Mammary epithelial cell (primary cell): ENCODE measurements at regions of chr5 and their contacts with region 1.

Region 1: DNA sequence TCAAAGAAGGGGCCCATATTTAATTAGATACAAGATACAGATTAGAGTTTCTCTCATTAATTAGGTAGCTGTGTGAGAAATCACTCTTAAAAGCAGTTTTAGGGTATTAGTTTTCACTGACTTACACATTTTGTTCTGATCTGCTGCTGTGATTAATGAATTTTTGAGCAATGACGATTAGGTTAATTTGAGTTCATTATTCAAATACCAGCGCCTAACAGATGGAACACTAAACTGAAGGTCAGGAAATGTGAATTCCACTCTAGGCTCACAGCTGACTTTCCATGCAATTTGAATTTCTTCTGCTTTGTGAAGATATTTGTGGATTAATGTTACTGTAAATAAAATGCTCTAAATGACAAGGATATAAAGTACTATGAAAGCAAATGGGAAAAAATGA is 380.6 kb downstream of the ADGRV1 start:
- DNase-seq: no peak
- H3K4me3 ChIP-seq: no peak overlapping the region
- H3K27ac ChIP-seq: no peak overlapping the region
- H3K4me1 ChIP-seq: peaks cover 12% of the 10 kb centered on the region
- H3K27me3 ChIP-seq: no peaks in the 10 kb centered on the region
- CTCF ChIP-seq: no peak

Region 2: GRCh38 chr5:90878549-90879196 is 60.5 kb before region 1 on chr5:
- CTCF ChIA-PET with region 1: no interaction called
- dilution Hi-C with region 1: no loop called
- in situ Hi-C with region 1: no loop called
- intact Hi-C with region 1: no loop called
- DNase-seq: peak; percentile 16
- H3K4me3 ChIP-seq: no peak overlapping the region
- H3K27ac ChIP-seq: no peak overlapping the region
- H3K4me1 ChIP-seq: no peaks in the 10 kb centered on the region
- H3K27me3 ChIP-seq: no peaks in the 10 kb centered on the region
- CTCF ChIP-seq: no peak

Region 3: GRCh38 chr5:91089758-91090157 is 150.5 kb after region 1 on chr5:
- CTCF ChIA-PET with region 1: no interaction called
- dilution Hi-C with region 1: no loop called
- in situ Hi-C with region 1: loop called in 1 of 2 experiments (anchors 25 kb)
- intact Hi-C with region 1: loop called (anchors 5 kb)
- DNase-seq: no peak
- H3K4me3 ChIP-seq: no peak overlapping the region
- H3K27ac ChIP-seq: no peak overlapping the region
- H3K4me1 ChIP-seq: no peaks in the 10 kb centered on the region
- H3K27me3 ChIP-seq: peaks cover 3% of the 10 kb centered on the region
- CTCF ChIP-seq: no peak